CD8-positive, alpha-beta memory T cell (primary cell): ENCODE measurements at regions of chr1 and their contacts with region 1.

Region 1: DNA sequence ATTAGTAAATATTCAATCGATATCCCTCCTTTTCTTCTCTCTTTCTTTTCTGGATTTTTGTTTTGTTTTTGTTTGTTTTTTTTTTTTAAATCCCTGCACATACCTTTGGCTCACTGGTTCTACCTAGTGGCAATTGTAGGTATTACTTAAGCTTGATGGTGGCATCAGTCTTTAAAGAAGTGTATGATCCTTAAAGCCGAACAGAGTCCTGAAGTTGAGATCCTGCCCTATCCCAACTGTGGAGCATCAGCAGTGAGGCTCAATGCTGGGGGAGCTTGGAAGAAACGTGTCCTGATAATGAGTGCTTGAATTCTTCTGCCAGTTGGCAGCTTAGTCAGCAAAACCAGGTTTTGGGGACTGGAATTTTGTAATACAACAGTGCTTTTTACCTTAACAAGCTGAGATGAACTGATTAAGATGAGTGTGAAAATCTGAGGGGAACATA is 60.8 kb downstream of the FASLG start:
- DNase-seq: peak in 2 of 5 donors; percentile 49 to 51
- H3K4me3 ChIP-seq: no peak overlapping the region
- H3K4me3 Mint-ChIP-seq: no peak overlapping the region
- H3K27ac ChIP-seq: no peak overlapping the region
- H3K27ac Mint-ChIP-seq: peak overlapping the region in 5 of 8 donors; percentile 3 to 19 (median 13)
- H3K4me1 ChIP-seq: peaks cover 7% of the 10 kb centered on the region
- H3K4me1 Mint-ChIP-seq: peaks cover 28 to 46% (median 43%) of the 10 kb centered on the region in 3 donors
- H3K27me3 ChIP-seq: no peaks in the 10 kb centered on the region
- H3K27me3 Mint-ChIP-seq: no peaks in the 10 kb centered on the region

Region 2: GRCh38 chr1:172602706-172603105 is 117.0 kb before region 1 on chr1:
- CTCF ChIA-PET with region 1: interaction called, 18 read pairs
- POLR2A ChIA-PET with region 1: interaction called, 3 read pairs
- DNase-seq: no peak
- H3K4me3 ChIP-seq: no peak overlapping the region
- H3K4me3 Mint-ChIP-seq: no peak overlapping the region
- H3K27ac ChIP-seq: no peak overlapping the region
- H3K27ac Mint-ChIP-seq: peak overlapping the region in 1 of 8 donors; percentile 6
- H3K4me1 ChIP-seq: no peaks in the 10 kb centered on the region
- H3K4me1 Mint-ChIP-seq: peaks cover 0 to 3% (median 2%) of the 10 kb centered on the region in 3 donors
- H3K27me3 ChIP-seq: no peaks in the 10 kb centered on the region
- H3K27me3 Mint-ChIP-seq: no peaks in the 10 kb centered on the region

Region 3: GRCh38 chr1:172609528-172609927 is 110.2 kb before region 1 on chr1:
- CTCF ChIA-PET with region 1: interaction called, 62 read pairs
- POLR2A ChIA-PET with region 1: interaction called, 4 read pairs
- DNase-seq: peak in 2 of 5 donors; percentile 21 to 26
- H3K4me3 ChIP-seq: no peak overlapping the region
- H3K4me3 Mint-ChIP-seq: no peak overlapping the region
- H3K27ac ChIP-seq: no peak overlapping the region
- H3K27ac Mint-ChIP-seq: peak overlapping the region in 4 of 8 donors; percentile 2 to 67 (median 12)
- H3K4me1 ChIP-seq: no peaks in the 10 kb centered on the region
- H3K4me1 Mint-ChIP-seq: peaks cover 4 to 7% (median 6%) of the 10 kb centered on the region in 3 donors
- H3K27me3 ChIP-seq: no peaks in the 10 kb centered on the region
- H3K27me3 Mint-ChIP-seq: no peaks in the 10 kb centered on the region

Region 4: GRCh38 chr1:172638885-172639831 is 80.6 kb before region 1 on chr1:
- CTCF ChIA-PET with region 1: interaction called, 11 read pairs
- POLR2A ChIA-PET with region 1: interaction called, 3 read pairs
- DNase-seq: peak; percentile 36 to 79 (median 70)
- H3K4me3 ChIP-seq: peak overlapping the region; percentile 32
- H3K4me3 Mint-ChIP-seq: peak overlapping the region; percentile 7 to 85 (median 76)
- H3K27ac ChIP-seq: peak overlapping the region; percentile 29
- H3K27ac Mint-ChIP-seq: peak overlapping the region; percentile 77 to 97 (median 92)
- H3K4me1 ChIP-seq: peaks cover 70% of the 10 kb centered on the region
- H3K4me1 Mint-ChIP-seq: peaks cover 72 to 81% (median 73%) of the 10 kb centered on the region in 3 donors
- H3K27me3 ChIP-seq: no peaks in the 10 kb centered on the region
- H3K27me3 Mint-ChIP-seq: no peaks in the 10 kb centered on the region

Region 5: GRCh38 chr1:172658871-172659453 is 60.8 kb before region 1 on chr1 and contains the start of gene FASLG:
- CTCF ChIA-PET with region 1: interaction called, 29 read pairs
- POLR2A ChIA-PET with region 1: interaction called, 3 read pairs
- DNase-seq: peak in 4 of 5 donors; percentile 28 to 67 (median 42)
- H3K4me3 ChIP-seq: peak within 1 kb of the TSS; percentile 2
- H3K4me3 Mint-ChIP-seq: peak within 1 kb of the TSS; percentile 80 to 98 (median 96)
- H3K27ac ChIP-seq: peak within 1 kb of the TSS; percentile 60
- H3K27ac Mint-ChIP-seq: peak within 1 kb of the TSS; percentile 74 to 98 (median 96)
- H3K4me1 ChIP-seq: peaks cover 48% of the 10 kb centered on the region
- H3K4me1 Mint-ChIP-seq: peaks cover 53 to 69% (median 64%) of the 10 kb centered on the region in 3 donors
- H3K27me3 ChIP-seq: no peaks in the 10 kb centered on the region
- H3K27me3 Mint-ChIP-seq: peaks cover 0 to 2% of the 10 kb centered on the region in 2 donors
- total RNA-seq, gene FASLG: 45.8 to 46.6 TPM

Region 6: DNA sequence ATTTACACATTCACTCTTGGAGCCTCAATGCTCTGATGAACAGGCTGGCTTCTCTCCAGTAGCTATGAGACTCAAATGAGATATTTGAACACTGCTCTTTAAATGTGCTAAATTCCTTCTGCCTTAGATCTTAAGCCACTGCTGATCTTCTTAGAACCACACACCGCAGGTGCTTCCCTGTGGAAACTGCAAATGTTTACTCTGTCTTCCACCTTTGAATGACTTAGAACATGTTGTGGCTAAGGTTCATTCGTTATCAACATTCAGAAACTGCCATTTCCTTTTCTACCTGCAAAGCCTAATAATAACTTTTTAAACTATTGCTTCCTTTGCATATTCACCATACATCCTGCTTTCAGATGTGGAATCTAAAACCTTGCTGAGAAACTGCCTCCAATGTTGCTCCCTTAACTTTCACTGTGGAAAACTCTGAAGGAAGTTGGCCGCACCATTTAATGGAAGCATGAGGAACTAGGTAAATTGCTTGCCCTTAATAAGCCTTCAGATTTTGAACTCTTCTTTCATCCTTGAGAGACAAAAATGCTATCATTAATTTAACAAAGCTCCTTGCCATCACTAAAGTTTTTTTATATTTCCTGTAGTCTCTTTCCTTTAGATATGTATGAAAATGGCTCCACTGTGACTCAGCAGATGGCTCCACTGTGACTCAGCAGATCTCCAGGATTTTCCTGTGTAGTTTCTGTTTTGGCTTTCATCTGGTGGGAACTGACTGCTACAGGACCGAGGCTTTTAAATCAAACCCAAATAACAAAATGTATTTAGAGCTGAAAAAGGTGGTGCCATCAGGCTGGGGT is 187.3 kb after region 1 on chr1:
- CTCF ChIA-PET with region 1: no interaction called
- POLR2A ChIA-PET with region 1: no interaction called
- DNase-seq: peak in 4 of 5 donors; percentile 6 to 57 (median 22)
- H3K4me3 ChIP-seq: no peak overlapping the region
- H3K4me3 Mint-ChIP-seq: peak overlapping the region in 5 of 7 donors; percentile 6 to 55 (median 15)
- H3K27ac ChIP-seq: no peak overlapping the region
- H3K27ac Mint-ChIP-seq: peak overlapping the region in 6 of 8 donors; percentile 22 to 73 (median 38)
- H3K4me1 ChIP-seq: peaks cover 20% of the 10 kb centered on the region
- H3K4me1 Mint-ChIP-seq: peaks cover 15 to 27% (median 26%) of the 10 kb centered on the region in 3 donors
- H3K27me3 ChIP-seq: no peaks in the 10 kb centered on the region
- H3K27me3 Mint-ChIP-seq: no peaks in the 10 kb centered on the region